Naive thymus-derived CD8-positive, alpha-beta T cell (primary cell): ENCODE measurements at regions of chr20 and their contacts with region 1.

Region 1: DNA sequence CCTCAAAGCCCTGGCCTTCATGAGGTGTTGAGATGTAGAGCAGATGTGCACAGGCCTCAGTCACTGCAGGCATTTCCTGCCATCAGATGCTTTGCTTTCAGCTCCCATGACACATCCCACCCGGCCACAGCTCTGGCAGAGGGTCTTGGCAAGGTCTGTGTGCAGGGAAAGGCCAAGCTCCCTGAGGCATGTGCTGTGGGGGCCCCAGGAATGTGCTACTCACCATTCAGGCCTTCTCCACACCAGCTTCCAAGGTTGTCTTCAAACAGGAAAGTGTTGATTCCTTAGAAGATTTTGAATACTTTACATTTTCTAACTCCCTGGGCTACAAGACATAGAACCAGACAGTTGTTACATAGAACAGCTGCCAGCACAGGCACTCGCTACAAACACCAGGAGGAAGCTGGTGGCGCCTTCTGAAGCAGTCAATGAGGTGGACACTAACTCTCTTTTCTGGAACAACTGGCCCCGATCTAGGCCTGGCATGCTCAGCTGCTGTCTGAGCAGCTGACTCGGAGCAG is 27.8 kb downstream of the CASS4 start:
- DNase-seq: peak in 1 of 10 donors; percentile 24
- ATAC-seq: peak; percentile 14 to 39
- H3K4me3 Mint-ChIP-seq: peak overlapping the region; percentile 53 to 84 (median 73)
- H3K27ac Mint-ChIP-seq: peak overlapping the region; percentile 82 to 96 (median 92)
- H3K4me1 Mint-ChIP-seq: peaks cover 36 to 67% (median 59%) of the 10 kb centered on the region in 4 donors
- H3K27me3 Mint-ChIP-seq: no peaks in the 10 kb centered on the region

Region 2: GRCh38 chr20:56403465-56403864 is 36.4 kb before region 1 on chr20:
- POLR2A ChIA-PET with region 1: no interaction called
- DNase-seq: peak in 1 of 10 donors; percentile 68
- ATAC-seq: no peak
- H3K4me3 Mint-ChIP-seq: peak overlapping the region in 1 of 10 donors; percentile 67
- H3K27ac Mint-ChIP-seq: peak overlapping the region in 7 of 10 donors; percentile 24 to 96 (median 65)
- H3K4me1 Mint-ChIP-seq: peaks cover 0 to 26% (median 10%) of the 10 kb centered on the region in 4 donors
- H3K27me3 Mint-ChIP-seq: no peaks in the 10 kb centered on the region

Region 3: DNA sequence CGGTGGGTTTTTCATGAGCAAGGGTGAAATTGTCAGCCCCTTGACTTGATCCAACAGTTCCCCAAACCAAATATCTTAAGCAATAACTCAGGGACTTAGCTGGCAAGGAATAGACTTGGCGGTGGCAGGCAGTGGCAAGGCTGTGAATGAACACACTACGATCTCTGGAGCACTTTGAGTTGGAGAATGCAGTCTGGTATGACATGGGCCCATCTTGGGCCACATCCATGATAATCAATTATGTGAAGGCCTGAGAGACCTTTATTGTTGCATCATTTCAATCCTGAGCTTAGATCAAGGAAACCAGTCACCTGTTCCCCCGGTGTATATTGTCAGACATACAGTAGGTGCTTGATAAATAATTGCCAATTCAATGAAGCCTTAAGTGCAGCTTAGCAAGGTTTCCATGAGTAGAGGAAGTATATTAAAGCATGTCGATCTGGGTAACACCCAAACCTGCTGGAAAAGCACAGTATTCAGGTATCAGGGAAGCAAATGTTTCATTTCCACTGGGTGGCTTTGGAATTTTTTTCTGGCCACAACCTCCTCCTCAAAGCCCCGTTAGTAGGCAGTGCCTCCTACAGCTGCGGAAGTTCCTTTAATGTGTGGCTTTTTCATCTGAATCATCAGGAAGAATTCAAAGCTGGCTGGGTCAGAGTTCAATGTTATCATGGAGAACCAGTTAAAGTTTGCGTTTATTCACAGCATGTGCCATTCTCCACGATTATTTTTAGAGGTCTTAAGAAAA is 17.6 kb before region 1 on chr20:
- POLR2A ChIA-PET with region 1: interaction called, 16 read pairs
- DNase-seq: no peak
- ATAC-seq: no peak
- H3K4me3 Mint-ChIP-seq: peak overlapping the region in 9 of 10 donors; percentile 37 to 75 (median 67)
- H3K27ac Mint-ChIP-seq: peak overlapping the region; percentile 86 to 99 (median 96)
- H3K4me1 Mint-ChIP-seq: peaks cover 39 to 79% (median 61%) of the 10 kb centered on the region in 4 donors
- H3K27me3 Mint-ChIP-seq: no peaks in the 10 kb centered on the region